Caco-2 (cell line): ENCODE measurements at regions of chr20 and their contacts with region 1.

Region 1: DNA sequence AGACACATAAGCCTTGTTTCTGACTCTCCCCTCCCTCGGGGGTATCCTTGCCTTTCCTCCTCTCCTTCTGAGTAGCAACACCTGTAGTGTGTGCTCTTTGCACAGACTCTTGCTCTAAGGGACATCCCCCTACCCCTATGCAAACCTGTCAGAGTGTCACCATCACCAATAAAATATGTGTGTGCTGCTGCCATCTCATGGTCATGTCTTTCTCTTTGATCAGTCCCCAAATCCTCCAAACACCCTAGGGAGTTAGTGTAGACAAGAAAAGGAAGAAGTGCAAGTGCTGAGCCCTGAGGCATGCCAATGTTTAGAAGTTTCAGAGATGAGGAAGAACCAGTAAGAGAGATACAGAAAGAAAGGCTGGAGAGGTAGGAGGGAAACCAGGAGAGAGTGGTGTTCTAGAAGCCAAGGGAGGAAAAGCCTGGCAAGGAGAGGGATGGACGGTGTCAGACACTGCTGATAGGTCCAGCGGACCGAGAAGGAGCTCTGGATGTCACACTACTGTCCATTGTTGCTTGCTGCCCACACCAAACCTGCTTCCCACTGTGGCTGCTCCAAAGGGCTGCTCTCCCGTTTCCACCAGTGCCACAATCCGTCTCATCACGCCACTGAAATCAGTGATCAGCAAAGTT is 16.4 kb downstream of the TRMT6 start:
- DNase-seq: peak in 1 of 2 experiments; percentile 60
- H3K4me3 ChIP-seq: no peak overlapping the region
- H3K4me3 Mint-ChIP-seq: no peak overlapping the region
- H3K27ac Mint-ChIP-seq: no peak overlapping the region
- H3K4me1 ChIP-seq: no peaks in the 10 kb centered on the region
- H3K4me1 Mint-ChIP-seq: peaks cover 7% of the 10 kb centered on the region
- H3K27me3 ChIP-seq: no peaks in the 10 kb centered on the region
- H3K27me3 Mint-ChIP-seq: no peaks in the 10 kb centered on the region
- CTCF ChIP-seq: peak; percentile 31 to 51

Region 2: DNA sequence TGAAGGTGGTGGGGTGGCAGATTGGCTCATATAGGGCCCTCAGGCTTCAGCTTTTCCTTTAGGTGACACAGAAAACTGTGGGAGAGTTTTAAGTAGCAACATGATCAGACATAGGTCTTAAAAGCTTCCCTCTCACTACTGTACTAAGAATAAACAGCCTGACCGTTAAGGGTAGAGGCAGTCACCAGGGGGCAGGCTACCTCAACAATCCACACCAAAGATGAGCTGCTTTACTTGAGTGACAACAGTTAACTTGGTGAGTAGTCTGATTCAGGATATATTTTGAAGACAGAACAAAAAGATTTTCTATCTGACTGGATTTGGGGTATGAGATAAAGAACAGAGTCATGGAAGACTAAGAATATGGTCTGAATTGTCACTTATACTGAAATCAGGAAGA is 376.8 kb before region 1 on chr20:
- CTCF ChIA-PET with region 1: interaction called, 4 read pairs
- POLR2A ChIA-PET with region 1: no interaction called
- intact Hi-C with region 1: loop called (anchors 1 kb)
- DNase-seq: peak; percentile 55 to 72
- H3K4me3 ChIP-seq: no peak overlapping the region
- H3K4me3 Mint-ChIP-seq: no peak overlapping the region
- H3K27ac Mint-ChIP-seq: no peak overlapping the region
- H3K4me1 ChIP-seq: no peaks in the 10 kb centered on the region
- H3K4me1 Mint-ChIP-seq: peaks cover 4% of the 10 kb centered on the region
- H3K27me3 ChIP-seq: no peaks in the 10 kb centered on the region
- H3K27me3 Mint-ChIP-seq: no peaks in the 10 kb centered on the region
- CTCF ChIP-seq: peak; percentile 44 to 78

Region 3: DNA sequence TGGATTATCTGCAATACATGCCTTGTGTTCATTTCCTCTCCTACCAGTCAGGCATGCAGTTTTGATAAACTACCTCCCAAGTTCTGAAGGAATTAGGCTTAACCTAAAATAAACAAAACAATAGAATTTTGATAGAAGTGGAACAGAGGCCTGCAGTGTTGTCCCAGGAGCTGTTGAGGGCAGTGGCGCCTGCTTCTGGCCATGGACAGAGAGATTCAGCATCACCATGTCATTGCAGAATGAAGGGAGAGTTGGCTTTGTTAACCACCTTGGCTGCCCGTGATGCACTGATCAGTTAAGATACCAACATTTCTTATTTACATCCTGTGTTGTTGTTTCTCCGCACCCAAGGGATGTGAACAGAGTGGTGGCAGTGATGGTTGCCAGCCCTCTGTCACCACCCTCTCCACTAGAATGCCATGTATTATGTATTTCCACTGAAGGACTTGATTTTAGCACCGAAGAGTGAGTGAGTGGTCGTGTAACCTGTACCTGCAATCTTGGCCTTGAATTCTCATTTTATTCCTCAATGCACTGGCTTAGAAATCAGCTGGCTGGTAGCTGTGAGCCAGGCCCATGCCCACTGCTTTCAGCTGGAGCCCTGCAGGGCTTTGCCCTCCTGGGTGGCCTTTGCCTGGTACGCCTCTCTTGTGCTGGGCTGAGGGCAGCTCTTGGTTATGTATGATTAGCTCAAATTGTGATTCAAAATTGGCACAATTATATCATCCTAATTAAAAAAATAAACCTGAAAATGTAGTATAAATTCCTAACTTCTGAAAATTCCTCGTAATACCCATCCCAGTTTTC is 127.3 kb before region 1 on chr20:
- CTCF ChIA-PET with region 1: interaction called, 3 read pairs
- POLR2A ChIA-PET with region 1: no interaction called
- intact Hi-C with region 1: loop called (anchors 5 kb)
- DNase-seq: no peak
- H3K4me3 ChIP-seq: no peak overlapping the region
- H3K4me3 Mint-ChIP-seq: no peak overlapping the region
- H3K27ac Mint-ChIP-seq: no peak overlapping the region
- H3K4me1 ChIP-seq: peaks cover 12% of the 10 kb centered on the region; the same call in 1 of the 2 replicates
- H3K4me1 Mint-ChIP-seq: no peaks in the 10 kb centered on the region
- H3K27me3 ChIP-seq: no peaks in the 10 kb centered on the region
- H3K27me3 Mint-ChIP-seq: no peaks in the 10 kb centered on the region
- CTCF ChIP-seq: no peak